ENCODE measurements at regions of chr4 and their contacts with region 1.

Region 1: GRCh38 chr4:184263910-184264732 is 46.4 kb upstream of the ENPP6 start:
- DNase-seq: no peak
- ATAC-seq: peak; percentile 45
- H3K4me3 ChIP-seq: peak overlapping the region; percentile 63
- H3K27ac ChIP-seq: peak overlapping the region; percentile 72
- H3K4me1 ChIP-seq: peaks cover 39% of the 10 kb centered on the region
- H3K27me3 ChIP-seq: no peaks in the 10 kb centered on the region
- CTCF ChIP-seq: peak; percentile 67 to 89 (median 86)
- EP300 ChIP-seq: no peak
- POLR2A ChIP-seq: 0 out of 2 replicates have a peak, but pooled peaks have one; percentile 37
- RAD21 ChIP-seq: peak; percentile 91

Region 2: GRCh38 chr4:183960046-183960420 is 304.1 kb before region 1 on chr4:
- CTCF ChIA-PET with region 1: no interaction called
- POLR2A ChIA-PET with region 1: no interaction called
- RAD21 ChIA-PET with region 1: no interaction called
- SMC1A ChIA-PET with region 1: no interaction called
- in situ Hi-C with region 1: no loop called
- intact Hi-C with region 1: no loop called
- DNase-seq: no peak
- ATAC-seq: no peak
- H3K4me3 ChIP-seq: no peak overlapping the region
- H3K27ac ChIP-seq: no peak overlapping the region
- H3K4me1 ChIP-seq: no peaks in the 10 kb centered on the region
- H3K27me3 ChIP-seq: no peaks in the 10 kb centered on the region; a peak in 1 of 4 replicates
- CTCF ChIP-seq: no peak
- EP300 ChIP-seq: no peak
- POLR2A ChIP-seq: no peak
- RAD21 ChIP-seq: no peak

Region 3: DNA sequence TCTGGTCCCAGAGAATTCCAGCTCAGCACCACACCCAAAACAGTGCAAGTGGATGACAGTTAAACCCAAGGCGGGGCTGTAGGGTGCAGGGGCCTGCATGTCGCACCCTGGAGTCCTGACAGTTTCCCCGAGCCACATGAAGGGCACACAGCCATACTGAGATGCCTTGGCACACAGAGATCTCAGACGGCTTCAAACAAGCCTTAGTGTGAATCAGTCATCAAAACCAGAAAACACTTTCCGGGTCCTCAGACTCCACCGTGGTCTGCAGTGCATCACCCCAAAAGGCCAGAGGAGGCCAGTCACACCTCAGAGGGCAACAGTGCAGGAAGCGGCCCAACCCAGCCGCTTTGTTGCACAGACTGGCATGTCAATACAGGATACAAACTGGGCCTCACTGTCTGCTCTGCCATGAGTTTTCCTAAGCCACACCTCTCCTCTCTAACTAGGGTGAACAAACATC is 18.2 kb after region 1 on chr4:
- CTCF ChIA-PET with region 1: interaction called, 348 read pairs
- POLR2A ChIA-PET with region 1: interaction called, 250 read pairs
- RAD21 ChIA-PET with region 1: interaction called, 367 read pairs
- SMC1A ChIA-PET with region 1: interaction called, 428 read pairs
- in situ Hi-C with region 1: no loop called
- intact Hi-C with region 1: loop called (anchors 1 kb)
- DNase-seq: peak; percentile 80
- ATAC-seq: peak; percentile 63
- H3K4me3 ChIP-seq: peak overlapping the region; percentile 25
- H3K27ac ChIP-seq: peak overlapping the region; percentile 99
- H3K4me1 ChIP-seq: peaks cover 69% of the 10 kb centered on the region
- H3K27me3 ChIP-seq: no peaks in the 10 kb centered on the region
- CTCF ChIP-seq: peak; percentile 50 to 70 (median 61)
- EP300 ChIP-seq: peak in 1 of 2 experiments; percentile 58; a peak in 2 of 4 replicates
- POLR2A ChIP-seq: peak; percentile 62
- RAD21 ChIP-seq: peak; percentile 69

Region 4: DNA sequence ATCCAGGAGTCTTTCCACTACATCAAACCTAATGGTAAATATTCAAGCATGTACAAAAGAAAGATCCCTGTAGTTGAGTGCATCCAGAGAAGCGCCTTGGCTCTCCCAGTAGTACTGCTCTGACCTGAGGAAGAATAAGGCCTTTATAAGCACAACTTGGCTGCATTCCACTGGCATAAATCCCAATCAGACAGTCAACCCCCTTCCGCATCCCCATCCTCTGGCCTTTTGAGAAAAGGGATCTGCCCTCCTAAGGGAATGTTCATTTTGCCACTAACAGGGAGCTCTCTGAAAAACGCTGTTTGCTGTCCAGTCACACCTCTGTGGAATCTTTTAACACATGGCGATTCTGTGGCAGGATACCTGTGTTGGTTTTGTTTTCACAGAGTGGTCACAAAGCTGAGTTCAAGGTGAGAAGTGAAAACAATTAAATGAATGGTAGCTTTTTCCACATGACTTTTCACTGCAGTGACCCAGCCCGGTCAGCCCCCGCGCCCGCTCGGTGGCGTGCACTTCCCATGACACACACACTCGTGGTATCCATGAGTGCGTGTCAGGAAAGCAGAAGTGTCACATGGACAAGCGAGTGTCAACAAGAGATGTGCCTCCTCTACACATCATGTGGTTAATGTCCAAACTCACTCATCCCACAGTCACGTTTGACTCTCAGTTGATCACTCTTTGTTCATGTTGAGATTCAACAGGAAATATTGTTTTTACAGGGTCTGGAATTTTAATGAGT is 65.7 kb after region 1 on chr4:
- CTCF ChIA-PET with region 1: interaction called, 40 read pairs
- POLR2A ChIA-PET with region 1: interaction called, 56 read pairs
- RAD21 ChIA-PET with region 1: interaction called, 158 read pairs
- SMC1A ChIA-PET with region 1: interaction called, 159 read pairs
- in situ Hi-C with region 1: no loop called
- intact Hi-C with region 1: no loop called
- DNase-seq: peak; percentile 90
- ATAC-seq: peak; percentile 81
- H3K4me3 ChIP-seq: no peak overlapping the region
- H3K27ac ChIP-seq: peak overlapping the region; percentile 90
- H3K4me1 ChIP-seq: peaks cover 44% of the 10 kb centered on the region
- H3K27me3 ChIP-seq: no peaks in the 10 kb centered on the region
- CTCF ChIP-seq: no peak; a peak in 2 of 6 replicates
- EP300 ChIP-seq: peak; percentile 98 to 100
- POLR2A ChIP-seq: peak; percentile 53; the same call in 1 of the 2 replicates
- RAD21 ChIP-seq: peak; percentile 28; the same call in 1 of the 2 replicates

Region 5: DNA sequence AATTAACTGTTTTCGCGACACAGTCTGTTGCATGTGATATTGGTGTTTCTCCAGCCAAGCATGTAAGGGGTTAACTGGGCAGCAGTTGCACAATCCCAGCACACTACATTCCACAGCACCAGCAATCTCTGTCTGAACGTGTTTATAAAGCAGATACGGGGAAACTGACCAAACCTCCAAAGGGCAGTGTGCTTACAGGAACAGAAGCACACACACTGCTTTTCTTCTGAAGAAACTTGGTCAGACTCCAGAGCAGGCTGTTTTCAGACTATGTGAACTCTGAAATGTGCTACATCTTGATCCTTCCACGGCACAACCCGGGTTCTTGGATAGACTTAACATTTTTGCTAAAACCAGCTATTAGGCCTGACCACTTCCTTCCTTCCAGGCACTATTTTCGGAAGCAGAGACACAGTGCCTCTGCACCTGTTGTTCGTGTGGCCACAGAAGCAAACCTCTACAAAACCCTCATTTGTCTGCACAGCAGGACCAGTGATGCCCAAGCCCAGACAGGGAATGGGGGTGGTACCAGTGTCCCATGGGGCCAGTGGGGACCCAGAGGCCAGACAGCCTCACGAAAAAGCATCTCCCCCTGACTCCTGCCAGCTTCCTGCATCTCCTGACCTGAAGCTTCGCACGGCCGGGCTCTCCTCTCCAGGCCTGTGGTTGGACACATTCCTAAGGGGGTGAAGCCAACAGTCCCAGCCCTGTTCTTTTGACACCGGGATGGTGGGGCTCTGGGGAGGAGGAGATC is 120.1 kb after region 1 on chr4:
- CTCF ChIA-PET with region 1: interaction called, 9 read pairs
- POLR2A ChIA-PET with region 1: interaction called, 4 read pairs
- RAD21 ChIA-PET with region 1: interaction called, 40 read pairs
- SMC1A ChIA-PET with region 1: interaction called, 33 read pairs
- in situ Hi-C with region 1: no loop called
- intact Hi-C with region 1: no loop called
- DNase-seq: peak; percentile 92
- ATAC-seq: peak; percentile 77
- H3K4me3 ChIP-seq: peak overlapping the region; percentile 59; the same call in 1 of the 2 replicates
- H3K27ac ChIP-seq: peak overlapping the region; percentile 88
- H3K4me1 ChIP-seq: peaks cover 68% of the 10 kb centered on the region
- H3K27me3 ChIP-seq: no peaks in the 10 kb centered on the region
- CTCF ChIP-seq: no peak
- EP300 ChIP-seq: peak; percentile 76 to 86
- POLR2A ChIP-seq: peak; percentile 70
- RAD21 ChIP-seq: no peak

Region 6: DNA sequence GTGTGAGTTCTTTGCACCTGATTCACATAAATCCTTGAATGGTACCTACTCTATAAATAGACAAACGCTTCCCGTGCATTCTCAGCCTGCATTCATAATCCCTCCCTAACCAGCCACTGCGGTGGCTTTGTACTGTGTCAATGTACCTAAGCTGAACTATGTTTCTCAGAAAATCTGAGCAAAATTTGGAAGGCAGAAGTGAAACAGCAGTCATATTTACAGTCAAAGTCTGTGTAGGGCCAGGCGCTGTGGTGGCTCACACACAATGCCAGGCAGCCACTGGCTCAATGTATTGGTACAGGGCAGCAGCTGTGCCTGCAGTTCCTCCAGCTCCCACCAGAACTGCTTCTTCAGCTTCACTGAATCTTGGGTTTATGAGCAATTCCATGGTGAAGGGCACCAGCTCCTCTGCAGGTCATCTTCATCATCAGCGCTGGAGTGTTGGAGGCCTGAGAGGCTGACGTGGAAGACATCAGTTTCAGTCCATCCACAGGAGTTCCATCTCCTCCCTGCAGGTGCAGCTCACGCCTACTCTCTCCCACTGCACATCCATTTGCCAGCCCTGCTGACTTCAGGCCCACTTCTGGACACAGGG is 242.5 kb after region 1 on chr4:
- CTCF ChIA-PET with region 1: interaction called, 6 read pairs
- POLR2A ChIA-PET with region 1: no interaction called
- RAD21 ChIA-PET with region 1: interaction called, 15 read pairs
- SMC1A ChIA-PET with region 1: interaction called, 9 read pairs
- in situ Hi-C with region 1: no loop called
- intact Hi-C with region 1: no loop called
- DNase-seq: peak; percentile 78
- ATAC-seq: peak; percentile 100
- H3K4me3 ChIP-seq: no peak overlapping the region
- H3K27ac ChIP-seq: peak overlapping the region; percentile 60
- H3K4me1 ChIP-seq: peaks cover 30% of the 10 kb centered on the region
- H3K27me3 ChIP-seq: no peaks in the 10 kb centered on the region
- CTCF ChIP-seq: peak in 2 of 3 experiments; percentile 47 to 61; a peak in 3 of 6 replicates
- EP300 ChIP-seq: peak in 1 of 2 experiments; percentile 27; a peak in 1 of 4 replicates
- POLR2A ChIP-seq: 0 out of 2 replicates have a peak, but pooled peaks have one; percentile 44
- RAD21 ChIP-seq: 0 out of 2 replicates have a peak, but pooled peaks have one; percentile 9

Region 7: GRCh38 chr4:184616633-184617551 is 352.8 kb after region 1 on chr4:
- CTCF ChIA-PET with region 1: interaction called, 10 read pairs
- POLR2A ChIA-PET with region 1: interaction called, 3 read pairs
- RAD21 ChIA-PET with region 1: interaction called, 5 read pairs
- SMC1A ChIA-PET with region 1: no interaction called
- in situ Hi-C with region 1: no loop called
- intact Hi-C with region 1: no loop called
- DNase-seq: peak; percentile 38
- ATAC-seq: peak; percentile 89
- H3K4me3 ChIP-seq: peak overlapping the region; percentile 41; the same call in 1 of the 2 replicates
- H3K27ac ChIP-seq: peak overlapping the region; percentile 34
- H3K4me1 ChIP-seq: peaks cover 10% of the 10 kb centered on the region
- H3K27me3 ChIP-seq: no peaks in the 10 kb centered on the region
- CTCF ChIP-seq: no peak
- EP300 ChIP-seq: peak in 1 of 2 experiments; percentile 17; a peak in 1 of 4 replicates
- POLR2A ChIP-seq: 0 out of 2 replicates have a peak, but pooled peaks have one; percentile 24
- RAD21 ChIP-seq: no peak

Region 8: GRCh38 chr4:184745831-184746795 is 482.0 kb after region 1 on chr4:
- CTCF ChIA-PET with region 1: interaction called, 10 read pairs
- POLR2A ChIA-PET with region 1: no interaction called
- RAD21 ChIA-PET with region 1: interaction called, 25 read pairs
- SMC1A ChIA-PET with region 1: interaction called, 9 read pairs
- in situ Hi-C with region 1: no loop called
- intact Hi-C with region 1: no loop called
- DNase-seq: no peak
- ATAC-seq: peak; percentile 89
- H3K4me3 ChIP-seq: no peak overlapping the region
- H3K27ac ChIP-seq: no peak overlapping the region
- H3K4me1 ChIP-seq: no peaks in the 10 kb centered on the region
- H3K27me3 ChIP-seq: no peaks in the 10 kb centered on the region
- CTCF ChIP-seq: peak; percentile 77 to 85 (median 82)
- EP300 ChIP-seq: no peak
- POLR2A ChIP-seq: no peak
- RAD21 ChIP-seq: peak; percentile 93

Measured in GM12878 (cell line).